ENCODE measurements at regions of chr1 and their contacts with region 1.

Region 1: DNA sequence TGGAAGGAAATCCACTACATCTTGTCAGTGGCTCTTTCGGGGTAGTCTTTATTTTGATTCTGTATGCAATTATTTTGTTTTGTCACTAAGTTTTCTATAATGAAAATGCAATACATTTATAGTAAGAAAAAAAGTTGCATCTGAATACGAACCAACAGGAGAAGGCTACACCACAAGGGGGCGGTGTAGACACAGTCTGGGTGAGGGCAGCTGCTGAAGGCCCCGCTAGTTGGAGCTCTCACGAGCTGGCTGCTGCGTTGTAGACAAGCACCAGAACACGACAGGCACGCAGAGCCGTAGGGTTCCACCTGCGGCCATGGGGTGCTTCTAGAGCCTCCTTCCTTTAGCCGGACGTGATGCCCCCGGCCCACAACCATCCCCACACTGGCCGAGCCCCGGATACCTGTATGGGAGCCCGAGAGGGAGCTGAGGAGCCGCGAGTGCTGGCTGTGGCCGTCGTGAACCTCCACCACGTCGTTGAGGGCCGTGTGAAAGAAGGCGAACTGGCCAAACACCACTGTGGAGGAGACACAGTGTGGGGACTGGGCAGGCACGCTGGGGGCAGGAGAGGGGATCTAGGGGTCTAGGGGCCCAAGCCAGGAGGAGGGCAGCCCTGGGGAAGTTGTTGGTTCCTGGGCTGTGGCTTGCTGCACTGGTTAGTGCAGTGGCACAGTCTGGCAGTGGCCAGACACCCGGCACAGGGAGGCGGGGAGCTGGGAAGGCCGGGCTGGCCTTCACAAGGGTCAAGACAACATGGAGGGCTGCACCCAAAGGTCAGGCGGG is 160.8 kb downstream of the ZSCAN20 start:
- DNase-seq: peak; percentile 88
- H3K4me3 Mint-ChIP-seq: no peak overlapping the region
- H3K27ac Mint-ChIP-seq: no peak overlapping the region
- H3K4me1 Mint-ChIP-seq: peaks cover 6% of the 10 kb centered on the region
- H3K27me3 Mint-ChIP-seq: peaks cover 62% of the 10 kb centered on the region
- CTCF ChIP-seq: peak; percentile 94

Region 2: GRCh38 chr1:33660244-33660643 is 27.0 kb after region 1 on chr1:
- CTCF ChIA-PET with region 1: interaction called, 14 read pairs
- POLR2A ChIA-PET with region 1: no interaction called
- intact Hi-C with region 1: no loop called
- DNase-seq: no peak
- H3K4me3 Mint-ChIP-seq: no peak overlapping the region
- H3K27ac Mint-ChIP-seq: no peak overlapping the region
- H3K4me1 Mint-ChIP-seq: no peaks in the 10 kb centered on the region
- H3K27me3 Mint-ChIP-seq: peaks cover 1% of the 10 kb centered on the region
- CTCF ChIP-seq: no peak